ENCODE measurements at regions of chr17 and their contacts with region 1.

Region 1: DNA sequence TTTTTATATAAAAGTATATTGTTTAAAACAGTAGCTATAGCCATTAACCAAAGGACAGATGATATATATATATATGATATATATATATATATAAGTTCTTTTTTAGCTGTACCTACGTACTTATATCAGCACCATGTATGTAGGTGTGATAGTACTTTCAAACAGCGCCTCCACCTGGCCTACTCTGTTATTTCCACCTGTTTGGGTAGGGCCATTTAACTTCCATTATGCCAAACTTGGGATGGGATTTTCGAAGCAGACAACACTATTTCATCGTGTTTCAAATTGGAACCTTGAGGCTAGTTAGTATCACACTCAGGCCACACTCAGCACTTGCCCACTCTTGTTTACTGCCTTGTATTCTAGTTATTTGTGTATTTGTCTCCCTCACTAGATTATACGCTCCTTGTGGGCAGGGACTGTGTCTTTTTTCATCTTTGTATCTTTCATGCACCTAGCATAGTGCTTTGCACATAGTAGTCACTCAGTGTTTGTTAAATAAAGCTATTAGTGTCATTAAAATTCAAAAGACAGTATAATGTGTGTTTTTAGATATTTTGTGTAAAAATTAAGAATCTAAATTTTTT is 11.8 kb upstream of the CLTC start:
- DNase-seq: peak; percentile 73
- ATAC-seq: peak; percentile 76
- H3K4me3 Mint-ChIP-seq: no peak overlapping the region
- H3K27ac Mint-ChIP-seq: no peak overlapping the region
- H3K4me1 Mint-ChIP-seq: no peaks in the 10 kb centered on the region
- H3K27me3 Mint-ChIP-seq: no peaks in the 10 kb centered on the region
- CTCF ChIP-seq: peak; percentile 64

Region 2: GRCh38 chr17:59671386-59671785 is 63.5 kb after region 1 on chr17:
- CTCF ChIA-PET with region 1: no interaction called
- POLR2A ChIA-PET with region 1: interaction called, 12 read pairs
- DNase-seq: no peak
- ATAC-seq: no peak
- H3K4me3 Mint-ChIP-seq: no peak overlapping the region
- H3K27ac Mint-ChIP-seq: no peak overlapping the region
- H3K4me1 Mint-ChIP-seq: no peaks in the 10 kb centered on the region
- H3K27me3 Mint-ChIP-seq: no peaks in the 10 kb centered on the region
- CTCF ChIP-seq: no peak